Naive thymus-derived CD4-positive, alpha-beta T cell (primary cell): ENCODE measurements at regions of chr1 and their contacts with region 1.

Region 1: GRCh38 chr1:63615768-63616420 is 22.7 kb downstream of the PGM1 start:
- DNase-seq: peak; percentile 7 to 81 (median 62)
- ATAC-seq: peak; percentile 88
- H3K4me3 ChIP-seq: no peak overlapping the region
- H3K4me3 Mint-ChIP-seq: no peak overlapping the region
- H3K27ac ChIP-seq: no peak overlapping the region
- H3K27ac Mint-ChIP-seq: no peak overlapping the region
- H3K4me1 ChIP-seq: no peaks in the 10 kb centered on the region
- H3K4me1 Mint-ChIP-seq: peaks cover 0 to 15% (median 5%) of the 10 kb centered on the region in 7 donors
- H3K27me3 ChIP-seq: no peaks in the 10 kb centered on the region
- H3K27me3 Mint-ChIP-seq: no peaks in the 10 kb centered on the region

Region 2: GRCh38 chr1:63435161-63435560 is 180.7 kb before region 1 on chr1:
- CTCF ChIA-PET with region 1: no interaction called
- POLR2A ChIA-PET with region 1: no interaction called
- intact Hi-C with region 1: no loop called
- DNase-seq: no peak
- ATAC-seq: no peak
- H3K4me3 ChIP-seq: no peak overlapping the region
- H3K4me3 Mint-ChIP-seq: no peak overlapping the region
- H3K27ac ChIP-seq: no peak overlapping the region
- H3K27ac Mint-ChIP-seq: no peak overlapping the region
- H3K4me1 ChIP-seq: no peaks in the 10 kb centered on the region
- H3K4me1 Mint-ChIP-seq: peaks cover 0 to 3% (median 0%) of the 10 kb centered on the region in 7 donors
- H3K27me3 ChIP-seq: no peaks in the 10 kb centered on the region
- H3K27me3 Mint-ChIP-seq: no peaks in the 10 kb centered on the region

Region 3: DNA sequence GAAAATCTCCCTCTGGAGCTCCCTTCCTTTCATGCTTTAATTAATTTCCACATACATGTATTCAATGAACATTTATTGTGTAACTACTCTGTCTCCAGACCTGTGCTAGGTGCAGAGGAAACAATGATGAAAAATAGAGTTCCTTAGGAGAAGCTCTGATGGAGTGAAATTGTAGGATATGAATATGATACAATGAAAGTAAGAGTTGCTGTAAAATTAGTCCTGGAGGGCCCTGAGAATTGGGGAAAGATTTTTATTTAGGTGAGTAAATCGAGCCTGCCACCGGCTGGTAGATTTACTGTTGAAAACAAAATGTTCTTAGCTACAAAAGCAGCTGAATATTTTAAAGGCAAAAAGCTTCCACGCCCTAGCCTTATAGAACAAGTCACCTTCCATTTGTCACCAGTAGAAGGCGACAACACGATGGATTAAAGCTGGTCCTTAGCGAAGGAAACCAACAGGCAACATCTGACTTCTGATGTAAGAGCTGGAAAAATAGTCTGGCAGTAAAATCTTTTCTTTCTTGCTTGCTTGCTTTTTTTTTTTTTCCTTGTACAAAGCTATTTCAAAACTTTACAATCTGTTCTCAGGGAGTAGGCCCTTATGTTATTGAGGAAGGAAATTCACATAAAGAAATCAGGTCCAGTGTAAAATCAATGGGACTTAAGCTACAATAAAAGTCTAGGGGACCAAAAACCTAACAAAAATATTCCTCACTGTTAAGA is 76.0 kb after region 1 on chr1:
- CTCF ChIA-PET with region 1: interaction called, 6 read pairs
- POLR2A ChIA-PET with region 1: no interaction called
- intact Hi-C with region 1: loop called (anchors 1 kb)
- DNase-seq: peak in 7 of 9 donors; percentile 4 to 47 (median 41)
- ATAC-seq: peak; percentile 49
- H3K4me3 ChIP-seq: no peak overlapping the region
- H3K4me3 Mint-ChIP-seq: no peak overlapping the region
- H3K27ac ChIP-seq: no peak overlapping the region
- H3K27ac Mint-ChIP-seq: no peak overlapping the region
- H3K4me1 ChIP-seq: no peaks in the 10 kb centered on the region
- H3K4me1 Mint-ChIP-seq: peaks cover 0 to 8% (median 6%) of the 10 kb centered on the region in 7 donors
- H3K27me3 ChIP-seq: no peaks in the 10 kb centered on the region
- H3K27me3 Mint-ChIP-seq: peaks cover 0 to 18% (median under 1%) of the 10 kb centered on the region in 5 donors

Region 4: GRCh38 chr1:63773815-63774616 is 158.1 kb after region 1 on chr1 and contains the start of gene ROR1:
- CTCF ChIA-PET with region 1: no interaction called
- POLR2A ChIA-PET with region 1: no interaction called
- intact Hi-C with region 1: loop called in 1 of 2 experiments (anchors 10 kb)
- DNase-seq: peak in 8 of 9 donors; percentile 7 to 73 (median 25)
- ATAC-seq: peak; percentile 74
- H3K4me3 ChIP-seq: no peak within 1 kb of the TSS
- H3K4me3 Mint-ChIP-seq: peak within 1 kb of the TSS; percentile 66 to 84 (median 78)
- H3K27ac ChIP-seq: no peak within 1 kb of the TSS
- H3K27ac Mint-ChIP-seq: no peak within 1 kb of the TSS
- H3K4me1 ChIP-seq: no peaks in the 10 kb centered on the region
- H3K4me1 Mint-ChIP-seq: peaks cover 10 to 20% (median 16%) of the 10 kb centered on the region in 7 donors
- H3K27me3 ChIP-seq: peaks cover 0 to 4% of the 10 kb centered on the region in 2 donors
- H3K27me3 Mint-ChIP-seq: peaks cover 61 to 75% (median 68%) of the 10 kb centered on the region in 5 donors
- total RNA-seq, gene ROR1: 0.07 to 0.22 (median 0.16) TPM in 3 of 5 experiments, not detected in the others

Region 5: GRCh38 chr1:63917571-63918417 is 301.9 kb after region 1 on chr1:
- CTCF ChIA-PET with region 1: no interaction called
- POLR2A ChIA-PET with region 1: no interaction called
- intact Hi-C with region 1: loop called (anchors 1 to 2 kb)
- DNase-seq: no peak
- ATAC-seq: no peak
- H3K4me3 ChIP-seq: no peak overlapping the region
- H3K4me3 Mint-ChIP-seq: no peak overlapping the region
- H3K27ac ChIP-seq: no peak overlapping the region
- H3K27ac Mint-ChIP-seq: no peak overlapping the region
- H3K4me1 ChIP-seq: no peaks in the 10 kb centered on the region
- H3K4me1 Mint-ChIP-seq: peaks cover 0 to 3% (median 0%) of the 10 kb centered on the region in 7 donors
- H3K27me3 ChIP-seq: no peaks in the 10 kb centered on the region
- H3K27me3 Mint-ChIP-seq: peaks cover 0 to 12% (median 3%) of the 10 kb centered on the region in 5 donors

Region 6: DNA sequence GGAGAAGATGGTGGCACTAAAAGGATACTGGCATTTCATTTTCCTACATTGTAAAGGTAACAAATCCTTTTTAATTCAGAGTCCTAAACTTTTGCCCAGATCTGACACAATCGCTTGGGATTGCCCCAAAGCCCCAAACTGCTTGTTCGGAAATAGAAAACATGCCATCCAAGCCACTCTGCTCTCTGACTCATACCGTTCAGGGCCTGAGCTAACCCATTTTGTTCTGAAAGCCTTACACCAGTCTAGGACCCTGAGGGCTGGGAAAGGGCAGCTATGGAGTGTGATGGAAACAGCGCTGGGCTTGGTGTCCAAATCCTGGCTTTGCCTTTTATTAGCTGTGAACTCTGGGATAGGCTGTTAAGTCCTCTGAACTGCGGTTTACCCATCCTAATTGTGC is 428.1 kb after region 1 on chr1:
- CTCF ChIA-PET with region 1: no interaction called
- POLR2A ChIA-PET with region 1: no interaction called
- intact Hi-C with region 1: no loop called
- DNase-seq: no peak
- ATAC-seq: no peak
- H3K4me3 ChIP-seq: no peak overlapping the region
- H3K4me3 Mint-ChIP-seq: no peak overlapping the region
- H3K27ac ChIP-seq: no peak overlapping the region
- H3K27ac Mint-ChIP-seq: no peak overlapping the region
- H3K4me1 ChIP-seq: no peaks in the 10 kb centered on the region
- H3K4me1 Mint-ChIP-seq: no peaks in the 10 kb centered on the region
- H3K27me3 ChIP-seq: no peaks in the 10 kb centered on the region
- H3K27me3 Mint-ChIP-seq: peaks cover 0 to 18% (median 6%) of the 10 kb centered on the region in 5 donors